Transverse colon (tissue), 4 donors: ENCODE measurements at regions of chr11 and their contacts with region 1.

Region 1: GRCh38 chr11:9613118-9613829 is 39.8 kb downstream of the WEE1 start:
- DNase-seq: peak; percentile 95
- H3K4me3 ChIP-seq: peak overlapping the region; percentile 10 to 49 (median 39)
- H3K27ac ChIP-seq: peak overlapping the region; percentile 89 to 98 (median 96)
- H3K4me1 ChIP-seq: peaks cover 0 to 25% (median 9%) of the 10 kb centered on the region in 4 donors
- H3K27me3 ChIP-seq: no peaks in the 10 kb centered on the region
- CTCF ChIP-seq: peak; percentile 93 to 99 (median 95)
- EP300 ChIP-seq: peak; percentile 71
- POLR2A ChIP-seq: peak; percentile 73

Region 2: DNA sequence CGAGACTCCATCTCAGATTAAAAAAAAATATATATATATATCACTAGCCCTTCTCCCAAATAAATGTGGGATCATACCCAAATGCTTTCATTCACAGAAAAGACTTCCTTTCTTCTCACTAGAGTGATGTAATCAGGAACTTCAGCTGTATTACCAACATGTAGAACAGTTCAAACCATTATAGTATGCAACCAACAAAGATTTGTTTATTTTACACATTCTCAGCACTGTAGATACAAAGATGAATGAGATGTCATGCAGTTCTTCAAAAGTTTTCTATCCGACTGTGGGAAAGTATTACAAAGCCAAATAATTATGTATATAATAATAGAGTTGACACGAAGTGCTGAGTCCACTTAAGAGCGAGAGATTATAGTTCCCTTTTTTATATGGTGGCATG is 174.7 kb before region 1 on chr11:
- in situ Hi-C with region 1: no loop called
- intact Hi-C with region 1: no loop called
- DNase-seq: no peak
- H3K4me3 ChIP-seq: no peak overlapping the region
- H3K27ac ChIP-seq: no peak overlapping the region
- H3K4me1 ChIP-seq: no peaks in the 10 kb centered on the region
- H3K27me3 ChIP-seq: no peaks in the 10 kb centered on the region
- CTCF ChIP-seq: no peak
- EP300 ChIP-seq: no peak
- POLR2A ChIP-seq: no peak

Region 3: GRCh38 chr11:9460322-9461067 is 152.8 kb before region 1 on chr11 and contains the start of gene ZNF143:
- in situ Hi-C with region 1: no loop called
- intact Hi-C with region 1: loop called (anchors 5 kb)
- DNase-seq: peak; percentile 100
- H3K4me3 ChIP-seq: peak within 1 kb of the TSS; percentile 52 to 98 (median 80)
- H3K27ac ChIP-seq: peak within 1 kb of the TSS; percentile 98 to 100 (median 100)
- H3K4me1 ChIP-seq: peaks cover 11 to 20% (median 15%) of the 10 kb centered on the region in 4 donors
- H3K27me3 ChIP-seq: no peaks in the 10 kb centered on the region
- CTCF ChIP-seq: peak in 2 of 5 experiments; percentile 57 to 61
- EP300 ChIP-seq: no peak
- POLR2A ChIP-seq: peak; percentile 97
- total RNA-seq, gene ZNF143: 6.6 to 21.8 (median 14.3) TPM

Region 4: DNA sequence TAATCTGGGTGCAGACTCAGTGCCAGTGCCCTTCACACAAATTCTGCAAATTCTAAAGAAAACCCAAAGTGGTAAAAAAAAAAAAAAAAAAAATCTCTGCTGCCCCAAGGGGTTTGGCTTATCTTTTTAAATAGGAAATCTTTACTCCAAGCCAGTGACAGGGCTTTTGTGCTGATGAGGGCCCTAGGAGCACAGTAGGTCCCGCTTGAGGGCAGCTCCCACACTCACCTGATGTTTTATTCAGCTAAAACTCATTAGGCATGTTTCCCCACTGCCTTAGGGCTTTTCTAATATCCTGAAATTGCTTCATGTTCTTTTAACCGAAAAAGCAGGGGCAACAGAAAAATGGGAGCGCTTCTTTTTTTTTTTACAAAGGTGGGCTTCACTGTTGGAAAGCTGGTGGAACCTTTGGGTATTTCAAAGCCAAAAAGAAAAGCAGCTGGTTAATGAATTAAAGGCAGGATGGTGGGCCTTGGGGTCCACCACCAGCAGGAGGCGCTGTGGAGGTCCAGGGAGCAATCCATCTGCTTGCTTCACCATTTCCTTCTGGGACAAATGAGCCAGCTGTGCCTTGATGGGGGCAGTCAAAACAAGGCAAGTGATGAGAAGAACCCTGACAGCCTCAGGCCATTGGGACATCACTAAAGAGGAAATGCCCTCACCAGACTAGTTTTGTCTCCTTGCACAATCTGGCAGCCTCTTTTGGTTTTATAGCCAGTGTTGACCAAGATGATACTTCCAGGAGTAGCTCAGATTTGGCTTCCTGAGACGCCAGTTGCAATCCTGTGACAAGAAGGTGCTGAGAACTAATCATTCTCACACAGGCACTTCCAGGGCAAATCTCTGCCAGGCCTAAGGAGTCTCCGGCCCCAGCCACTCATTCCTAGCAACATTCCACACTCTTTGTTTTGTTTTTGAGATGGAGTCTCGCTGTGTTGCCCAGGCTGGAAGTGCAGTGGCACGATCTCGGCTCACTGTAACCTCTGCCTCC is 78.2 kb before region 1 on chr11:
- in situ Hi-C with region 1: loop called in 2 of 4 experiments (anchors 5 to 10 kb)
- intact Hi-C with region 1: no loop called
- DNase-seq: peak; percentile 83
- H3K4me3 ChIP-seq: no peak overlapping the region
- H3K27ac ChIP-seq: no peak overlapping the region
- H3K4me1 ChIP-seq: peaks cover 2 to 13% (median 5%) of the 10 kb centered on the region in 4 donors
- H3K27me3 ChIP-seq: no peaks in the 10 kb centered on the region
- CTCF ChIP-seq: peak; percentile 76 to 84 (median 79)
- EP300 ChIP-seq: no peak
- POLR2A ChIP-seq: no peak

Region 5: DNA sequence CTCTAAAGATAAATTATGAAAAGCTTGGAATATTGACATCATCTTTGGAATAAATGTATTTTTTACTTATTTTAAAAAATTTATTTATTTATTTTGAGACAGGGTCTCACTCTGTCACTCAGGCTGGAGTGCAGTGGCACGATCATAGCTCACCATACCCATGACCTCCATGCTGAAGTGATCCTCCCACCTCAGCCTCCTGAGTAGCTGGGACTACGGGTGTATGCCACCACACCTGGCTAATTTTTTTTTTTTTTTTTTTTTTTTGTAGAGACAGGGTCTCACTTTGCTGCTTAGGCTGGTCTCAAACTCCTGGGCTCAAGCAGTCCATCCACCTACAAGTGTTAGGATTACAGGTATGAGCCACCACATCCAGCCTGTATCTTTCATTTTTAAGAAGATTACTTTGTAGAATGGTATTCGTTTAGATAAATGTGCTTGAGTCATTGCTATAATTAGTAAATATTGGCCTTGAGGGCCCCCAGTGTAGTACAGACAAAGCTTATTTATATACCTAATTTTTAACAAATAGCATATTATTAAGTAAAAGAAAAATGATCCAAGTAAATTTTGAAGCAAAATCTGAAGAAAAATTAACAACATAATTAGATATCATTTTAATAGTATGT is 59.1 kb after region 1 on chr11:
- in situ Hi-C with region 1: no loop called
- intact Hi-C with region 1: no loop called
- DNase-seq: no peak
- H3K4me3 ChIP-seq: no peak overlapping the region
- H3K27ac ChIP-seq: no peak overlapping the region
- H3K4me1 ChIP-seq: peaks cover 0 to 7% (median 4%) of the 10 kb centered on the region in 4 donors
- H3K27me3 ChIP-seq: no peaks in the 10 kb centered on the region
- CTCF ChIP-seq: no peak
- EP300 ChIP-seq: no peak
- POLR2A ChIP-seq: no peak

Region 6: GRCh38 chr11:9748361-9748970 is 135.2 kb after region 1 on chr11:
- in situ Hi-C with region 1: loop called in 2 of 4 experiments (anchors 10 kb)
- intact Hi-C with region 1: loop called (anchors 10 kb)
- DNase-seq: peak; percentile 57
- H3K4me3 ChIP-seq: no peak overlapping the region
- H3K27ac ChIP-seq: peak overlapping the region in 3 of 4 donors; percentile 46 to 56 (median 47)
- H3K4me1 ChIP-seq: peaks cover 6 to 11% (median 8%) of the 10 kb centered on the region in 4 donors
- H3K27me3 ChIP-seq: no peaks in the 10 kb centered on the region
- CTCF ChIP-seq: peak; percentile 61 to 83 (median 68)
- EP300 ChIP-seq: no peak
- POLR2A ChIP-seq: no peak